ENCODE measurements at regions of chr15 and their contacts with region 1.

Region 1: GRCh38 chr15:61309031-61309511 is 80.0 kb upstream of the RORA start:
- DNase-seq: no peak
- H3K4me3 ChIP-seq: no peak overlapping the region
- H3K27ac ChIP-seq: no peak overlapping the region
- H3K4me1 ChIP-seq: no peaks in the 10 kb centered on the region
- H3K27me3 ChIP-seq: no peaks in the 10 kb centered on the region
- CTCF ChIP-seq: no peak

Region 2: GRCh38 chr15:61243983-61244593 is 65.0 kb before region 1 on chr15:
- intact Hi-C with region 1: loop called (anchors 10 kb)
- DNase-seq: no peak
- H3K4me3 ChIP-seq: no peak overlapping the region
- H3K27ac ChIP-seq: no peak overlapping the region
- H3K4me1 ChIP-seq: no peaks in the 10 kb centered on the region
- H3K27me3 ChIP-seq: no peaks in the 10 kb centered on the region
- CTCF ChIP-seq: no peak

Region 3: GRCh38 chr15:61256219-61256618 is 52.9 kb before region 1 on chr15:
- intact Hi-C with region 1: no loop called
- DNase-seq: no peak
- H3K4me3 ChIP-seq: no peak overlapping the region
- H3K27ac ChIP-seq: no peak overlapping the region
- H3K4me1 ChIP-seq: no peaks in the 10 kb centered on the region
- H3K27me3 ChIP-seq: no peaks in the 10 kb centered on the region
- CTCF ChIP-seq: no peak

Region 4: GRCh38 chr15:61266921-61267320 is 42.1 kb before region 1 on chr15:
- intact Hi-C with region 1: no loop called
- DNase-seq: no peak
- H3K4me3 ChIP-seq: no peak overlapping the region
- H3K27ac ChIP-seq: no peak overlapping the region
- H3K4me1 ChIP-seq: no peaks in the 10 kb centered on the region
- H3K27me3 ChIP-seq: no peaks in the 10 kb centered on the region
- CTCF ChIP-seq: no peak

Region 5: GRCh38 chr15:61282661-61283060 is 26.4 kb before region 1 on chr15:
- intact Hi-C with region 1: no loop called
- DNase-seq: no peak
- H3K4me3 ChIP-seq: no peak overlapping the region
- H3K27ac ChIP-seq: no peak overlapping the region
- H3K4me1 ChIP-seq: no peaks in the 10 kb centered on the region
- H3K27me3 ChIP-seq: no peaks in the 10 kb centered on the region
- CTCF ChIP-seq: no peak